BJ (cell line): ENCODE measurements at regions of chr11 and their contacts with region 1.

Region 1: DNA sequence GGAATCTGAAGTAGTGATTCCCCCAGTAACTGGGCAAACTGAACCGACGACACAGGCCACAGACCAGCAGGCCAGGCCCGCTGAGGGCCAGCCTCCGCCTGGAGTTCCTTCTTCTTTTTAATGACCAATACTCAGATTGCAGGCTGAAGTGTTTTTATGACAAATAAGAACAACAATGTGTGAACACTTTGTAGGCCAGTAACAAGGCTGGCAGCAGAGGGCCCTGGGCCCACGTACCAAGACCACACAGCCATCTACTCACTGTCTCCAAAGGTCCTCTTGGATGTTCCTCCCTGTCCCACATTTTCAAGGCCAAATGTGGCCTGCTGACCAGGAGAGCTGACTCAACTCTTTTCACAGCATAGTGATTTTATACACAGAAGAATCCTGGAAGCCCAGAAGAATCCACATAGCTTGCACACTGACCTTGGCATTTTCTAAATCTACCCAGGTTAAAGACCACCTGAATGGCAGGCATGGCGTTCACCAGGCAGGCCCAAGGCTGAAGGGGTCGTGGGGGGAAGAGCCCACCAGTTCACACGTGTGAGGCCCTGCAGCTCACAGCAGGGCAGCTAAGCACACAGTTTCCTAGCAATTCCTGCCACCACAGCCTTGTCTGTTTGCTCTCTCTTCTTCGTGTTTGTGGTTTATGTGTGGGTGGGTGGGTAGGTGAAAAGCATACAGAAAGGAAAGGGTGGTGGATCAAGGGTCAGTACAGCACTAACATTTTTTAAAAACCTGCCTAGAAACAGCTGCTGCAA is 13.3 kb downstream of the SMCO4 start:
- DNase-seq: no peak
- H3K4me3 ChIP-seq: no peak overlapping the region
- H3K27me3 ChIP-seq: no peaks in the 10 kb centered on the region
- CTCF ChIP-seq: no peak

Region 2: GRCh38 chr11:93543292-93543977 is 13.5 kb after region 1 on chr11 and contains the start of gene SMCO4:
- CTCF ChIA-PET with region 1: interaction called, 24 read pairs
- POLR2A ChIA-PET with region 1: no interaction called
- DNase-seq: peak; percentile 14
- H3K4me3 ChIP-seq: peak within 1 kb of the TSS; percentile 77
- H3K27me3 ChIP-seq: peaks cover 3% of the 10 kb centered on the region
- CTCF ChIP-seq: peak; percentile 66
- polyA plus RNA-seq, gene SMCO4: 11.9 and 12.8 TPM in 2 replicates

Region 3: DNA sequence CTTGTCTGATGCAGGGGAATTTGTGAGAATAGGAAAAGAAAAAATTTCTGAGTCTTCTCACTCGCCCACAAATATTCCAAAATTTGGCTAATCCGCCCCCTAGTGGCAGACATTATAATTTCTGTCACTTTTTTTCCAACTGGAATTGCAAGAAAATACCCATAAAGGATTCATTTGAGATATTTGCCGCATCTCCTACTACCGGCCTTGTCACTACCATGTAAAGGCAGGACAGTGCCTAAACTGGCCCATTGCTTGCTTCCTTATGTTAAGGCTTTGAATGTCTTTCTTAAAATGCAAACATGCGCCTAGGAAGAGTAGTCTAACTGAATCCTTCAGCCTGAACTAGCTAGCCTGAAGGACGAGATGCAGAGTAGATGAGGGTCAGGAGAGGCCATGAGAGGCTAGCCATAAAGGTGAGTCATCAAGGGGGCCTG is 122.3 kb after region 1 on chr11:
- CTCF ChIA-PET with region 1: interaction called, 11 read pairs
- POLR2A ChIA-PET with region 1: no interaction called
- DNase-seq: no peak
- H3K4me3 ChIP-seq: no peak overlapping the region
- H3K27me3 ChIP-seq: peaks cover 4% of the 10 kb centered on the region; the same call in 1 of the 2 replicates
- CTCF ChIP-seq: peak; percentile 67